B cell (primary cell): ENCODE measurements at regions of chr1 and their contacts with region 1.

Region 1: DNA sequence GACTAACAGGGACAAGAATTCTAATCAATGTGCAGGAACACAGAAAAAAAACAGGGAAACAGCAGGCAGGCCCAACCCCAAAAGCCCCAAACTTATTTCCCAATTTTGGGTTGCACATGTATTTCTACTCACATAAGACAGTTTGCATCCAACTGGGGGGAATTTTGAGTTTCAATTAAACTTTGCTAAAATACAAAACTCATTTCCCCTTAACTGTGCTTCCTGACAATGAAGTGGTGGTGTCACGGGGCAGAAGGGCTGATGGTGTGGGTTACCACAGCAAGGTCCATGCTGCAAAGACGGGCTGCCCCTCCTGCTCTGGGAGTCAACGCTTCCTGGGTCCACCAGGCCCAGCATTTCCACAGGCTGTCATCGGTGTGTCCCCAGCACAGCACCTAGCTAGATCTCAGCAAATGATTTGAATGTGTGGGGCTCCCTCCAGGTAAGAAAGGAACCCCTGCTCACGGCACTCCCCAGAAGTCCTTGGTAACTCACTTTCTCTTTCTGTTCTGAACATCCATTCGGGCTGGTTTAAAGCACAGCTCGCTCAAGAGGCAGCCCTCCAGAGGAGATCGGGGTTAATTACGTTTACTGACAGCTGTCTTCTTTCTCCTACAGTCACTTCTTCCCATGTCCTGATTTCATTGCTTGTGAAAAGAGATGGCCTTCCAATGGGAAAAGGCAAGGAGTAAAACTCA is 27.4 kb downstream of the HIVEP3 start:
- DNase-seq: peak; percentile 86
- ATAC-seq: peak; percentile 96
- H3K4me3 ChIP-seq: peak overlapping the region; percentile 8 to 70 (median 52)
- H3K4me3 Mint-ChIP-seq: peak overlapping the region; percentile 84
- H3K27ac ChIP-seq: peak overlapping the region; percentile 72 to 80
- H3K27ac Mint-ChIP-seq: peak overlapping the region; percentile 83
- H3K4me1 ChIP-seq: peaks cover 13 to 23% of the 10 kb centered on the region in 2 donors
- H3K4me1 Mint-ChIP-seq: peaks cover 16% of the 10 kb centered on the region
- H3K27me3 ChIP-seq: no peaks in the 10 kb centered on the region
- H3K27me3 Mint-ChIP-seq: no peaks in the 10 kb centered on the region
- CTCF ChIP-seq: peak; percentile 51

Region 2: DNA sequence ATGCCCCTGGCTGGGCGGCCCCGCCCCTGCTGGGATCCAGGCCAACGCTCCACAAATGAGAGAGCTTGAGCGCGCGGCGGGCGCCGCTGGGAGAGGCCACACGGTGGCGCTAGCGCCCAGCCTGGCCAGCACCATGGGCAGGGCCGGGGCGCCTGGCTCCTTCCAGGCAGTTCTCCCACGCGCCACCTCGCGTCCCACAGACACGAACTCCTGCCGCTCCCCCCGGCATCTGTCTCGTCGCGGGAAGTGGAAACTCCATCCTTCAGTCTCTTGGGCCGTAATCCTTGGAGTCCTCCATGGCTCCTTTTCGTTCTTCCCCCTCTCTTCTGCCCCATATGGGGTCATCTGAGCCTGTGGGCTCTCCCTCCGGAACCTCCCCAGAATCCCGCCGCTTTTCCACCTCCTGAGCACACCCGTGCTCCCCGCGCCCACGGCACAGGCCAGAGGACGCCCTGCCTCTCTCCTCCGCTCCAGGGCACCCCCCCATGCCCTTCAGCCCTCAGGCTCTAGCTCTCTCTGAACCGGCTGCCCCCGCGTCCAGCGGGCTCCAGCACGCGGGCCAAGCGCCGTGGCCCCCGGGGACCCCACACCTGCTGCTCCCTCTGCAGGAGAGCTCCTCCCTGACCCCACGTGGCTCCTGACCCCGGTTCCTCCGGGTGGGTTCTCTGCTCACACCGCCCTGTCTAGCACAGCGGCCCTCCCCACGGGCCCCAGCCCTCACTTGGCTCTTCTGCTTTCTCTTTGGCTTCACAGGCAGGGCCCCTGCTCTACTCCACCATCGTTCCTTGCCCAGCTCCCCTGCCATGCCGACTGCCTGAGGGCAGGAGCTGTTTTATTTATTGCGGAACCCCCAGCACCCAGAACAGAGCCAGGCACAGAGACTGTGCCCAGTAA is 374.9 kb before region 1 on chr1:
- CTCF ChIA-PET with region 1: interaction called, 11 read pairs
- POLR2A ChIA-PET with region 1: no interaction called
- intact Hi-C with region 1: no loop called
- DNase-seq: peak; percentile 77
- ATAC-seq: peak; percentile 87
- H3K4me3 ChIP-seq: peak overlapping the region in 4 of 5 experiments; percentile 48 to 59 (median 53)
- H3K4me3 Mint-ChIP-seq: peak overlapping the region; percentile 87
- H3K27ac ChIP-seq: no peak overlapping the region
- H3K27ac Mint-ChIP-seq: peak overlapping the region; percentile 37
- H3K4me1 ChIP-seq: peaks cover 25 to 39% of the 10 kb centered on the region in 2 donors
- H3K4me1 Mint-ChIP-seq: peaks cover 35% of the 10 kb centered on the region
- H3K27me3 ChIP-seq: no peaks in the 10 kb centered on the region
- H3K27me3 Mint-ChIP-seq: no peaks in the 10 kb centered on the region
- CTCF ChIP-seq: peak; percentile 95

Region 3: GRCh38 chr1:41765152-41765551 is 126.2 kb before region 1 on chr1:
- CTCF ChIA-PET with region 1: no interaction called
- POLR2A ChIA-PET with region 1: no interaction called
- intact Hi-C with region 1: loop called (anchors 10 kb)
- DNase-seq: peak; percentile 39
- ATAC-seq: peak; percentile 41
- H3K4me3 ChIP-seq: no peak overlapping the region
- H3K4me3 Mint-ChIP-seq: peak overlapping the region; percentile 50
- H3K27ac ChIP-seq: no peak overlapping the region
- H3K27ac Mint-ChIP-seq: no peak overlapping the region
- H3K4me1 ChIP-seq: peaks cover 51 to 53% of the 10 kb centered on the region in 2 donors
- H3K4me1 Mint-ChIP-seq: peaks cover 59% of the 10 kb centered on the region
- H3K27me3 ChIP-seq: no peaks in the 10 kb centered on the region
- H3K27me3 Mint-ChIP-seq: no peaks in the 10 kb centered on the region
- CTCF ChIP-seq: no peak

Region 4: GRCh38 chr1:41868599-41868998 is 22.7 kb before region 1 on chr1:
- CTCF ChIA-PET with region 1: interaction called, 12 read pairs
- POLR2A ChIA-PET with region 1: no interaction called
- intact Hi-C with region 1: no loop called
- DNase-seq: peak; percentile 71
- ATAC-seq: peak; percentile 80
- H3K4me3 ChIP-seq: peak overlapping the region in 1 of 5 experiments; percentile 32
- H3K4me3 Mint-ChIP-seq: peak overlapping the region; percentile 29
- H3K27ac ChIP-seq: no peak overlapping the region
- H3K27ac Mint-ChIP-seq: no peak overlapping the region
- H3K4me1 ChIP-seq: peaks cover 7 to 10% of the 10 kb centered on the region in 2 donors
- H3K4me1 Mint-ChIP-seq: peaks cover 17% of the 10 kb centered on the region
- H3K27me3 ChIP-seq: no peaks in the 10 kb centered on the region
- H3K27me3 Mint-ChIP-seq: no peaks in the 10 kb centered on the region
- CTCF ChIP-seq: peak; percentile 42